ENCODE measurements at regions of chr1 and their contacts with region 1.

Region 1: DNA sequence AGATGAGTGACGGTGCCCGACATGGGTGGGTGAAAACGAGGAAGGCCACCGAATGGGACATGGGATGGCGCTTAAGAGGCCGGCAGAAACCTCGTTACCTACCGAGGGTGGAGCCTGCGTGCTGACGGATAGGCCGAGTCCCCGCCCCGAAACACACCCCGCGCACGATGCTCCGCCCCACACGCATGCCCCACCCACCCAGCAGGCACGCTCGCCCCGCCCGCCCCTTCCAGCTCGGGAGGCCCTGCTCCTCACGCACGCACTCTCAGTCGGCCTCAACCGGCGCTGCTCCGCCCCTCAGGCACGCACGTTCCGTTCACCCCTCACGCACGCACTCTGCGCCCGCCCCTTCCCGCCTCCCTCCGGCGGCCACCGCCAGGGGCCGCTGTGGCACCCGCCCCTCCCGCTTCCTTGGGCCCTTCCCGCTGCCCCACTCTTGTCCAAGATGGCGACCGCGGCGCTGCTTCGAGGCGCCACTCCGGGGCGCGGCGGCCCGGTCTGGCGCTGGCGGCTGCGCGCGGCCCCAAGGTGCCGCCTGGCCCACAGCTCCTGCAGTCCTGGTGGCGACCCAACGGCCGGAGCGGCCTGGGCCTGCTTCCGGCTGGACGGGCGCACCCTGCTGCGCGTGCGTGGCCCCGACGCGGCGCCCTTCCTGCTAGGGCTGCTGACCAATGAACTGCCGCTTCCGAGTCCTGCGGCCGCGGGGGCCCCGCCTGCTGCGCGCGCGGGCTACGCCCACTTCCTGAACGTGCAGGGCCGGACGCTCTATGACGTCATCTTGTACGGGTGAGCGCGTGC is at the start of gene IBA57:
- DNase-seq: peak; percentile 99
- H3K4me3 ChIP-seq: peak within 1 kb of the TSS; percentile 6 to 67 (median 55)
- H3K27ac ChIP-seq: peak within 1 kb of the TSS; percentile 91
- H3K4me1 ChIP-seq: peaks cover 29% of the 10 kb centered on the region
- H3K27me3 ChIP-seq: no peaks in the 10 kb centered on the region
- CTCF ChIP-seq: peak; percentile 90 to 98
- POLR2A ChIP-seq: peak; percentile 77
- total RNA-seq, gene IBA57: 7.7 and 9.9 TPM in 2 replicates

Region 2: DNA sequence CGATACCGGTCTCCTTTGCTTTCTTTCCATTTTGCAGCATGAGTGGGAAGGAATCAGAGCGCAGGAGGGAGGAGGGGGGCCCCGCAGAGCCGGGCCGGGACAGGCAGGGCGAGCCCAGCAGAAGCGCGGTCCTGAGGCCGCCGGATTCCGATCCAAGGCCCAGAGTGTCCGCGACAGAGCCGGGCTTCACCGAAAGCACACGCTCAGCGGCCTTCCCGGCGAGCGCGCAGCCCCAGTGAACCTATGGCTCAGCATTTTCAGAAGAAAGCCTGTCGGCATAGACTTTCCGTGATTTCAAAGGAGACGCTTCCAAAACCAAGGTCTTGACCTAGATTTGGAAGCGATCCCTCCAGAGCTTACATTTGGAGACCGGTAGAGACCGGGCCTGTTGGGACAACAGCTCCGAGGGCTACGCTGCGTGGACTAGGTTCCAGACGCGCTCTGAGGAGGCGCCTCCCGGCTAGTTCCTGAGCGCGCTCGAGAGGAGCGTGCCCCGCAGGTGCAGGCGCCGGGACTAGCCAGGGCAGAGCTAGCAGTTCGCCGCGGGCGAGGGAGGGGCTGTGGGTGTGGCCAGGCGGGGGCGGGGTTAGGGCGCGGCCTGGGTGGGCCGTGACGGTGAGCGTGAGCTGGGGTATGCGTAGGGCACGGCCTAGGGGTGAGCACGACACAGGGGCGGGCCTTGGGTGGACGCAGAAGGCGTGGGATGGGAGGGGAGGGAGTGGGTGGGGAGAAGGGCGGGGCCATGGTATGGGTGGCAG is 377.9 kb before region 1 on chr1:
- CTCF ChIA-PET with region 1: no interaction called
- POLR2A ChIA-PET with region 1: no interaction called
- dilution Hi-C with region 1: no loop called
- intact Hi-C with region 1: loop called (anchors 10 kb)
- DNase-seq: peak; percentile 92
- H3K4me3 ChIP-seq: peak overlapping the region; percentile 50 to 62 (median 60)
- H3K27ac ChIP-seq: no peak overlapping the region
- H3K4me1 ChIP-seq: peaks cover 9% of the 10 kb centered on the region
- H3K27me3 ChIP-seq: peaks cover 0 to 1% of the 10 kb centered on the region in 2 experiments
- CTCF ChIP-seq: no peak
- POLR2A ChIP-seq: no peak

Region 3: DNA sequence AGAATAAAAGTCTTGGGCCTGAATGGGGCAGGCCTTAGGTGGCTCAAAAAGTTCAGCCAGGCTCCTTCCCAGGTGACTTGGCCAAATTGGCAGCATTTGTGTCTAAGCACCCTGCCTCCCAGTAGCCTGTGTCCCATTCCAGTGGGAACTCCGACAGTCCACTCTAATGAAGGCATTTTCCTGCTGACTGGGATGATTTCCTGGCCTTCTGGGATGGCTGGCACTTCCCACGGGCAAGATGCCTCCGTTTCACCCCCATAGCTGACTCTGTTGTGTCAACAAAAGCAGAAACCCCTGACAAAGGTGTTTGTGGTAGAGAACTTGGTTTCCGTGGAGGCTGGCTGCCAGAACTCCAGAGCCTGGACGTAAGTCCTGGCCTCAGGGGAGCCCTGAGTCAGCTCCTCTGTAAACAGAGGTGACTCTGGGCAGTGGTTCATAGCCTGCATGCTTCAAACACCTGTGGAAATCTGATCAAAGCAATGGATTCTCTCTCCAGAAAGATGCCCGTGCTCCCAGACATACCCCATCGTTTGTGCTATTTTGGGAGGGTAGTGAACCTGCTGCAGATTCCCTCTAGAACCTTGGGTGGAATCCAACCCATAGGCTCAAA is 122.2 kb before region 1 on chr1:
- CTCF ChIA-PET with region 1: no interaction called
- POLR2A ChIA-PET with region 1: no interaction called
- dilution Hi-C with region 1: no loop called
- intact Hi-C with region 1: no loop called
- DNase-seq: no peak
- H3K4me3 ChIP-seq: no peak overlapping the region
- H3K27ac ChIP-seq: no peak overlapping the region
- H3K4me1 ChIP-seq: no peaks in the 10 kb centered on the region
- H3K27me3 ChIP-seq: peaks cover under 1 to 10% of the 10 kb centered on the region in 2 experiments
- CTCF ChIP-seq: no peak
- POLR2A ChIP-seq: no peak

Region 4: GRCh38 chr1:228087771-228088251 is 77.8 kb before region 1 on chr1:
- CTCF ChIA-PET with region 1: no interaction called
- POLR2A ChIA-PET with region 1: interaction called, 4 read pairs
- dilution Hi-C with region 1: no loop called
- intact Hi-C with region 1: loop called (anchors 1 kb)
- DNase-seq: peak; percentile 94
- H3K4me3 ChIP-seq: peak overlapping the region in 1 of 3 experiments; percentile 10
- H3K27ac ChIP-seq: peak overlapping the region; percentile 94
- H3K4me1 ChIP-seq: peaks cover 79% of the 10 kb centered on the region
- H3K27me3 ChIP-seq: no peaks in the 10 kb centered on the region
- CTCF ChIP-seq: no peak
- POLR2A ChIP-seq: no peak

Region 5: DNA sequence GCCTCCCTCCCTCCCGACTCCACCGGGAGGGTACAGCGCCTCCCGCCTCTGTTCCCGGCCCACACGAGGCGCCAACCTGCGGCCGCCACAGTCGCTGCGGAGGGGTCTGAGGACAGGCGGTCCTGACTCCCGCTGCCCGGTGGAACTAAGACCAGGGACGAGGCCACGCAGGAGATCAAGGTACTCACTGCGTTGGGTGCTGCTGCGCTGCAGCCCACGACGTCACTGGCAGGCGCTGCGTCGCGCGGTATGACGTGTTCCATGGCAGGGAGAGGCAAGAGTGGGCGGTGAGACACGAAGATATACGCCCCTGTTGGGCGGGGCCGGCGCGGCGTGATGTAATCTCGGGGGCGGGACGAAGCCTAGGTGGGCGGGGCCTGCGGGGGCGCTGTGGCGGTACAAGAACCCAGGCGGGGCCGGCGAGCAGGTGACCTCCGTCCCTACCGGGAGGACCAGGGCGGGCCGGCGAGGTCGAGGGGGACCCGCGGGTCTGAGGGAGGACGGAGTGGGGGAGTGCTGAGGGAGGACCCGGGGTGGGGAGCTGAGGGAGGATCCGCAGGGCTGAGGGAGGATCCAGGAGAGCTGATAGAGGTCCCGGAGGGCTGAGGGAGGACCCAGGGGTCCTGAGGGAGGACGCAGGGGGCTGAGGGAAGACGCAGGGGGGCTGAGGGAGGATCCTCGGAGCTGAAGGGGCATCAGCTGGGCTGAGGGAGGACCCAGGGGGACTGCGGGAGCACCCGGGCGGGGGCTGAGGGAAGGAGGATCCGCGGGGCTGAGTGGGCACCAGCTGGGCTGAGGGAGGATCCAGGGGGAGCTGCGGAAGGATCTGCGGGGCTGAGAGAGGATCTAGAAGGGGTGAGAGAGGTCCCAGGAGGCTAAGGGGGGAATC is 56.3 kb before region 1 on chr1 and contains the start of gene MRPL55:
- CTCF ChIA-PET with region 1: interaction called, 5 read pairs
- POLR2A ChIA-PET with region 1: no interaction called
- dilution Hi-C with region 1: no loop called
- intact Hi-C with region 1: loop called (anchors 1 kb)
- DNase-seq: peak; percentile 98
- H3K4me3 ChIP-seq: peak within 1 kb of the TSS; percentile 29 to 92 (median 63)
- H3K27ac ChIP-seq: peak within 1 kb of the TSS; percentile 32
- H3K4me1 ChIP-seq: peaks cover 13% of the 10 kb centered on the region
- H3K27me3 ChIP-seq: no peaks in the 10 kb centered on the region
- CTCF ChIP-seq: no peak
- POLR2A ChIP-seq: peak; percentile 82
- total RNA-seq, gene MRPL55: 57.0 and 58.7 TPM in 2 replicates

Region 6: DNA sequence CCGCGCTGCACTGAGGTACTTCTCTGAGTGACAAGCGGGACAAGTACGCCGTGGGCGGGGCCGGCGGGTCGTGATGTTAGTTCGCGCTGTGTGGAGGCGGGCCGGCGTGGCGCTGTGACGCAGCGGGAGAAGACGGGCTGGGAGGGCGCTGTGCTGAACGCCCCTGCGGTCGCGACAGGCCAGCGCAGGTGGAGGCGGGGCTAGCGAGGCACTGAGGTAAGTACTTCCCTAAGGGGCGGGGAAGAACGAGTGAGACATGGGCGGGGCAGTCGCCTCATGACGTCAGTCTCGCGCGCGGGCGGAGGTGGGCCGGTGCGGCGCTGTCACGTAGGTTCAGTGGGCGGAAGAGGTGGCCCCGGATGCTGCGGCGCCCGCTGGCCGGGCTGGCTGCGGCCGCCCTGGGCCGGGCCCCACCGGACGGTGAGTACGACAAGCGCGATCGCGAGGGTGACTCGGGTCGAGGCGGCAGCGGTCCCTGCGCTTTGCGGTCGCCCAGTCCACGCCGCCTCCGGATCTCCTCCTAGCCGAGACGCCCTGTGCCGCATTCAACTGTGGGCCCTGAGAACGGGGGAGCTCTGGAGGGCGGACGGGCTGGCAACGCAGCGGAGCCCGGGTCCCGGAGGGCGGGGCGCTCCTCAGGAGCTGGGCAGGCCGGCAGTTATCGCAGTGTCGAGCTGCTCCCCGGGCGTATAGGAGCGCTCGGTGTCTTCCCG is 25.5 kb before region 1 on chr1 and contains the start of gene GUK1:
- CTCF ChIA-PET with region 1: interaction called, 10 read pairs
- POLR2A ChIA-PET with region 1: interaction called, 5 read pairs
- dilution Hi-C with region 1: no loop called
- intact Hi-C with region 1: loop called (anchors 1 kb)
- DNase-seq: peak; percentile 100
- H3K4me3 ChIP-seq: peak within 1 kb of the TSS; percentile 53 to 77 (median 65)
- H3K27ac ChIP-seq: peak within 1 kb of the TSS; percentile 82
- H3K4me1 ChIP-seq: peaks cover 18% of the 10 kb centered on the region
- H3K27me3 ChIP-seq: peaks cover 15 to 21% of the 10 kb centered on the region in 2 experiments
- CTCF ChIP-seq: peak in 1 of 2 donors; percentile 43
- POLR2A ChIP-seq: peak; percentile 95
- total RNA-seq, gene GUK1: 237 and 239 TPM in 2 replicates

Region 7: DNA sequence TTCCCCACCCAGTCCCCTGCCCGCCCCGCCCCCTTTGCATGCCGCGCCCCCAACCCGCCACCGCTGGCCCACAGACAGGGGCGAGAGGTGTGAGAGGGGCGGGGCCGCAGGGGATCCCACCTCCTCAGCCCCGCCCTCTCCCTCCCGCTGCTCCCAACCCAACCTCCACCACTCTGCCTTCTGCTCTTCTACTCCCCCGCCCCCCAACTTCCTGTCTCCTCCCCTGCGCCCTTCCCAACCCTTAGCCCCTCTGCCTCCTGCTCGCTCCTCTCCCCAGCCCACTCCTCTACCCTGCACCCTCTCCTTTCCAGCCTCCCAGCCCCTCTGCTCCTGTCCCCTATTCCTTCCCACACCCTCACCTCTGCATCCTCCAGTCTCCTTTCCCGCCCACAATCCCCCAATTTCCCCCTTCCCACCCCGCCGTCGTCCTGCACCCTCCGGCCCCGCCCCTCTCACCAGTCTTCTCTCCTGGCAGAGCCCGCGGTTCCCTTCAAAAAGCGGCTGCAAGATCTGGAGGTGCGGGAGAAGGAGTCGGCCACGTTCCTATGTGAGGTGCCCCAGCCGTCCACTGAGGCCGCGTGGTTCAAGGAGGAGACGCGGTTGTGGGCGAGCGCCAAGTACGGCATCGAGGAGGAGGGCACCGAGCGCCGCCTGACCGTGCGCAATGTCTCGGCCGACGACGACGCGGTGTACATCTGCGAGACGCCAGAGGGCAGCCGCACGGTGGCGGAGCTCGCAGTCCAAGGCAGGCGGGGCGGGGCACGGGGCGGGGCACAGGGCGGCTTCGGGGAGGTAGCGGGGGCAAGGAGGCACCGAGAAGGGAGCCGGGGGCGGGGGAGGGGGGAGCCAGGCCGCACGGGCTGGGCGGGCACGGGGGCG is 47.6 kb after region 1 on chr1:
- CTCF ChIA-PET with region 1: no interaction called
- POLR2A ChIA-PET with region 1: no interaction called
- dilution Hi-C with region 1: no loop called
- intact Hi-C with region 1: loop called (anchors 2 kb)
- DNase-seq: peak; percentile 63
- H3K4me3 ChIP-seq: peak overlapping the region in 1 of 3 experiments; percentile 26
- H3K27ac ChIP-seq: no peak overlapping the region
- H3K4me1 ChIP-seq: no peaks in the 10 kb centered on the region
- H3K27me3 ChIP-seq: peaks cover 4 to 16% of the 10 kb centered on the region in 2 experiments
- CTCF ChIP-seq: peak; percentile 33 to 73
- POLR2A ChIP-seq: no peak

Region 8: GRCh38 chr1:228457396-228458176 is 292.0 kb after region 1 on chr1:
- CTCF ChIA-PET with region 1: interaction called, 5 read pairs
- POLR2A ChIA-PET with region 1: interaction called, 3 read pairs
- dilution Hi-C with region 1: no loop called
- intact Hi-C with region 1: loop called (anchors 2 kb)
- DNase-seq: peak; percentile 99
- H3K4me3 ChIP-seq: peak overlapping the region; percentile 36 to 71 (median 46)
- H3K27ac ChIP-seq: peak overlapping the region; percentile 36
- H3K4me1 ChIP-seq: peaks cover 18% of the 10 kb centered on the region
- H3K27me3 ChIP-seq: peaks cover 7 to 13% of the 10 kb centered on the region in 2 experiments
- CTCF ChIP-seq: peak; percentile 3 to 42
- POLR2A ChIP-seq: peak; percentile 95